ENCODE measurements at regions of chr3 and their contacts with region 1.

Region 1: DNA sequence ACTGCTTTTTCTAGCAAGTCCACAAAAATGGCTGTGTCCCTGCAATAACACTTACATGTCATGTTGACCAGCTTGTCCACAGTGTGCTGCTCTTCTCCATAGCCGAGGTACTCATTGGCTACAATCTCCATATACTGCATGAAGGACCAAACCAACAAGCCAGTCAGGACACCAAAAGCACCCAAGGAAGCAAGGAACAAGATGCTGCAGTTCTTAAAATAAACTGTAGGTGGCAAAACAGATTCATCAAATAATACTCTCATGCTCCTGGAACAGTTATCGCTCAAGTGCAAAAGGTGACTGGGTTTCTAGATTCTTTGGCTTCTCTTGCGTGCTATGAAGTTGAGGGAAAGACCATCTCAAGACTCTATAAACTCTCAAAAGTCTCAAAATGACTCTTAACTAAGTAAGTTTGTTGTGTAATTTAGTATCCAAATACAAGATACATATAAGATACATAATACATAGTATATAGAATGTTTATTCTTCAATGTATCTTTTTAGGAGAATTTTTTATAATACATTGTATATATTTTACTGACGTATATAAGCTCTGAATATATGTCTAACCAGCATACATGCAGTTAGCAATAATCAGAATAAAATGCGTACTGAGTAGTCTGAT is 57.0 kb downstream of the NEK10 start:
- DNase-seq: no peak
- H3K4me3 ChIP-seq: no peak overlapping the region
- H3K27ac ChIP-seq: no peak overlapping the region
- H3K4me1 ChIP-seq: peaks cover 0 to 7% (median 3%) of the 10 kb centered on the region in 4 donors
- H3K27me3 ChIP-seq: no peaks in the 10 kb centered on the region
- CTCF ChIP-seq: peak; percentile 76 to 87 (median 79)
- EP300 ChIP-seq: no peak
- POLR2A ChIP-seq: no peak

Region 2: GRCh38 chr3:27467545-27467944 is 155.4 kb after region 1 on chr3:
- in situ Hi-C with region 1: loop called in 2 of 4 experiments (anchors 5 to 10 kb)
- intact Hi-C with region 1: no loop called
- DNase-seq: no peak
- H3K4me3 ChIP-seq: no peak overlapping the region
- H3K27ac ChIP-seq: no peak overlapping the region
- H3K4me1 ChIP-seq: peaks cover 0 to 19% (median 5%) of the 10 kb centered on the region in 4 donors
- H3K27me3 ChIP-seq: no peaks in the 10 kb centered on the region
- CTCF ChIP-seq: peak; percentile 51 to 68 (median 58)
- EP300 ChIP-seq: no peak
- POLR2A ChIP-seq: no peak

Region 3: GRCh38 chr3:27681245-27681748 is 369.1 kb after region 1 on chr3:
- in situ Hi-C with region 1: loop called (anchors 10 to 25 kb)
- intact Hi-C with region 1: loop called (anchors 10 kb)
- DNase-seq: no peak
- H3K4me3 ChIP-seq: no peak overlapping the region
- H3K27ac ChIP-seq: peak overlapping the region in 2 of 4 donors; percentile 5 to 36
- H3K4me1 ChIP-seq: peaks cover 0 to 19% (median 6%) of the 10 kb centered on the region in 4 donors
- H3K27me3 ChIP-seq: no peaks in the 10 kb centered on the region
- CTCF ChIP-seq: peak; percentile 56 to 80 (median 64)
- EP300 ChIP-seq: no peak
- POLR2A ChIP-seq: no peak

Region 4: GRCh38 chr3:28317438-28318022 is 1005.4 kb after region 1 on chr3:
- in situ Hi-C with region 1: loop called in 1 of 4 experiments (anchors 25 kb)
- intact Hi-C with region 1: no loop called
- DNase-seq: peak; percentile 13
- H3K4me3 ChIP-seq: no peak overlapping the region
- H3K27ac ChIP-seq: no peak overlapping the region
- H3K4me1 ChIP-seq: no peaks in the 10 kb centered on the region
- H3K27me3 ChIP-seq: no peaks in the 10 kb centered on the region
- CTCF ChIP-seq: peak; percentile 31 to 51 (median 43)
- EP300 ChIP-seq: no peak
- POLR2A ChIP-seq: no peak

Region 5: DNA sequence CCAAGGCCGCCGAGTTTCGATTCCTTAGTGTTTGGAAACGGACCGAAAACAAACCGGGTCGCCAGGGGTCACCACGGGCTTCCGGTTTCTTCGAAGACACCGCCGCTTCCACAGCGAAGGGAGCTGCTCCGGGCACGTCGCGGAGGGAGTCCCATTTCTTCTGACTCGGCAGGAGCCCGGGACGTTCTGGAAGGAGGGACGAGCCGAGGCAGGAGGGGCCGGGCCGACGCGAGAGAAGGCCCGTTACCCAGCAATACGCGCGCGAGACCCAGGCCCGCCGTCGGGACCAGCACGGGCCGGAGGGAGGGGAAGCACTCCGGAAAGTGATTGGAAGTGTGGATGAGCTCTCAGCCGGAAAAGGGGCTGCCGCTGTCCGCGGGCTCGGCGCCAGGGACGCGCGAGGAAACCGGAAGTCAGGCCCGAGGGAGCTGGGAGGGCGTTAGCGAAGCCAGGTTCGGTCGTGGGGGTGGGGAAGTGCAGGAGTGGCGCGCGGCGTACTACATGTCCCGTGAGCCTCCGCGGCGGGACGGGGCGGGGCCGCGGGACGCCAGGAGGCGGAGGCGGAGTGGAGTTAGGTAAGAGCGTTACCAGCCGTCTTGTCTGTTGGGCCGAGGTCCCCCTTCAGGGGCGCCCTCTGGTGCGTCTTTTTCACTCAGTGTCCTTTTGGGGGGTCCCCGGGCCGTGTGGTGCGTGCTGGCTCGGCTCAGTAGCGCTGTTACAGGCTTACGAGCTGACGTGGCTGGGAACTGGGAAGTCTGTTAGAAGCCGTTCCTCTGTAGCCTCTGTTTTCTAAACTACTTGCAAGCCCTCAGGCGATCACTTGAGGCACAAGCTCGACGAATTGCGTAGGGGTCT is 1036.7 kb after region 1 on chr3 and contains the starts of genes AZI2 and ZCWPW2:
- in situ Hi-C with region 1: loop called in 2 of 4 experiments (anchors 25 kb)
- intact Hi-C with region 1: no loop called
- DNase-seq: peak; percentile 97
- H3K4me3 ChIP-seq: peak within 1 kb of the TSS; percentile 70 to 98 (median 86)
- H3K27ac ChIP-seq: peak within 1 kb of the TSS; percentile 98 to 100 (median 98)
- H3K4me1 ChIP-seq: peaks cover 14 to 49% (median 25%) of the 10 kb centered on the region in 4 donors
- H3K27me3 ChIP-seq: no peaks in the 10 kb centered on the region
- CTCF ChIP-seq: peak in 4 of 5 experiments; percentile 12 to 29 (median 16)
- EP300 ChIP-seq: no peak
- POLR2A ChIP-seq: peak; percentile 71
- total RNA-seq, gene AZI2: 31.0 to 119 (median 65.0) TPM
- total RNA-seq, gene ZCWPW2: 0.41 to 0.79 TPM in 2 of 4 donors, not detected in the others